Gastrocnemius medialis (tissue), 4 donors: ENCODE measurements at regions of chr16 and their contacts with region 1.

Region 1: DNA sequence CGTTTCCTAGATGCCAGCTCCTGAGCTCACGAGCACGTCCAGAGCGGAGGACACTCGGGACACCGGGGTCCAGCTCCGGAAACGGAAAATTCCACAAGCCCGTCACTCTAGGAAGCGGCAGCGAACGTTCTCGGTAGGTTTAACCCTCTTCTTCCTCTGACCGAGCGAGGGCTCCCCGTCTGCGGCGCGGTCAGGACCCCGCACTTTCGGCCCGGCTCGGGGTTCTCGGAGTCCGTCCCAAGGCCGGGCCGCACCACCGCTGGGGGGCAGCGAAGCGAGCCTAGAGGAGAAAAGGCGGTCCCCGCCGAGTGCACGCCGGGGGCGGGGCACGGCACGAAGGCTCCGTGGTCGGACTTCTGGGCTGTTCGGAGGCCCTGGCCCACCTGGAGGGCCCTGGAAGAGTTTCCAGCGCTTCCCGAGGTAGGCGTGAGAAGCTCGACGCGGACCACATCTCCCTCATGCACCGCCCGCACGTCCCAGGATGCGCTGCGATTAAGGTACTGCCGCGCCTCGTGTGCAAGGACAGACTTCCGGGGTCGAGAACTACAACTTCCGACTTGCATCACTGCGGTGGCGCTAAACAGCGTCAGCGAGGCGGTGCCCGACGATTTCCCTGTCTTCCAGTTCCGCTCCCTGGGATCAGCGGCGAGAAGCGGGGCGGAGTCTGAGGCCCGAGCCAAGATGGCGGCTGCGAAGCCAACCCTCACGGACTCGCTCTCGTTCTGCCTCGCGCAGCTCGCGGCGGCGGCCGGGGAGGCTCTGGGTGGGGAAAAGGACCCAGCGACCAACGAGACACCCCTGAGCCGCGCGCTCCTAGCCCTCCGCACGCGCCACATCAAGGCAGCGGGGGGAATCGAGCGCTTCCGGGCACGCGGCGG is at the start of gene ARMC5:
- DNase-seq: peak; percentile 97 to 98
- ATAC-seq: peak; percentile 78 to 82
- H3K4me3 ChIP-seq: peak within 1 kb of the TSS; percentile 77 to 90 (median 86)
- H3K27ac ChIP-seq: peak within 1 kb of the TSS; percentile 90 to 99 (median 94)
- H3K4me1 ChIP-seq: peaks cover 53 to 57% of the 10 kb centered on the region in 2 donors
- H3K27me3 ChIP-seq: no peaks in the 10 kb centered on the region
- CTCF ChIP-seq: peak; percentile 33 to 80 (median 74)
- POLR2A ChIP-seq: peak; percentile 93 to 97
- total RNA-seq, gene ARMC5: 13.9 to 24.3 (median 19.4) TPM

Region 2: GRCh38 chr16:30957456-30958174 is 501.5 kb before region 1 on chr16 and contains the start of gene SETD1A:
- in situ Hi-C with region 1: no loop called
- intact Hi-C with region 1: loop called (anchors 1 kb)
- DNase-seq: peak; percentile 95
- ATAC-seq: peak; percentile 92 to 93
- H3K4me3 ChIP-seq: peak within 1 kb of the TSS; percentile 70 to 94 (median 84)
- H3K27ac ChIP-seq: peak within 1 kb of the TSS; percentile 97 to 99 (median 98)
- H3K4me1 ChIP-seq: peaks cover 11 to 17% of the 10 kb centered on the region in 2 donors
- H3K27me3 ChIP-seq: no peaks in the 10 kb centered on the region
- CTCF ChIP-seq: peak in 2 of 5 experiments; percentile 22 to 41
- POLR2A ChIP-seq: peak; percentile 66 to 75
- total RNA-seq, gene SETD1A: 3.8 to 15.4 (median 9.8) TPM

Region 3: DNA sequence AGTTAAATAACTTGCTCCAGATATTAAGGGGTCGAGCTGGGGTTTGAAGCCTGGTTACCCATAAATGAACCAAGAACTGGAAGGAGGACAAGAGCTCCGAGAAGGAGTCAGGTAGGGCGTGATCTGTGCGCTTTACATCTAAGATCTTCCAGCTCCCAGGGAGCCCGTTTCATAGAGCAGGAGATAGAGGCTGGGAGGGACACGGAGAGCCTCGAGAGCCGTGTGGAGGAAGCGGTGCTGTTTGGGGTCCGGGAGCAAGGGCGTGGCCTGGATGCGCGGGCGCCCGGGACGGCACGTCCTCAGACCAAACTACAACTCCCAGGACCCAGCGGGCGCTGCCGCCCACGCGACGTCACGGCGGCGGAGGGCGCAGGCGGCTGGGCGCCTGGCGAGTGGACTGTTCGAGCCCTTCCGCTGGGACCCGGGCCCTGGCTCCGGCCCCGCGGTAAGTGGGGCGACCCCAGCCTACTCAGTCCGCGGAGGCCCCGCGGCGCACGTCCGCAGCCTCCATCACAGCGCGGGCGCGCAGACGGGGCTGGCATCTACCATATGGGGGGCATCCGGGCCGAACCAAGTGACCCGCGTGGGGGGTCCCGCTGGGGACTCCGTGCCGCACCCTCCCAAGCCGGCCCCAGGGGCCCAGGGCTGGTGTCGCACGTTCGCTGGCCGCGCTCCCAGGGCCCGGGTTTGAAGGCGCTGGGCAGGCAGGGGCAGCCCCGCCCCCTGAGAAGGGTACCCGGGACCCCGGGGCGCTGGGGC is 350.9 kb before region 1 on chr16 and contains the start of gene BCKDK:
- in situ Hi-C with region 1: no loop called
- intact Hi-C with region 1: loop called (anchors 5 kb)
- DNase-seq: peak; percentile 52 to 70
- ATAC-seq: peak; percentile 50
- H3K4me3 ChIP-seq: peak within 1 kb of the TSS; percentile 74 to 98 (median 92)
- H3K27ac ChIP-seq: peak within 1 kb of the TSS; percentile 85 to 100 (median 97)
- H3K4me1 ChIP-seq: peaks cover 35 to 43% of the 10 kb centered on the region in 2 donors
- H3K27me3 ChIP-seq: no peaks in the 10 kb centered on the region
- CTCF ChIP-seq: no peak
- POLR2A ChIP-seq: peak; percentile 71 to 81
- total RNA-seq, gene BCKDK: 24.7 to 68.9 (median 50.9) TPM

Region 4: GRCh38 chr16:31367853-31368252 is 91.2 kb before region 1 on chr16:
- in situ Hi-C with region 1: no loop called
- intact Hi-C with region 1: no loop called
- DNase-seq: no peak
- ATAC-seq: no peak
- H3K4me3 ChIP-seq: no peak overlapping the region
- H3K27ac ChIP-seq: no peak overlapping the region
- H3K4me1 ChIP-seq: no peaks in the 10 kb centered on the region
- H3K27me3 ChIP-seq: no peaks in the 10 kb centered on the region
- CTCF ChIP-seq: no peak
- POLR2A ChIP-seq: no peak

Region 5: DNA sequence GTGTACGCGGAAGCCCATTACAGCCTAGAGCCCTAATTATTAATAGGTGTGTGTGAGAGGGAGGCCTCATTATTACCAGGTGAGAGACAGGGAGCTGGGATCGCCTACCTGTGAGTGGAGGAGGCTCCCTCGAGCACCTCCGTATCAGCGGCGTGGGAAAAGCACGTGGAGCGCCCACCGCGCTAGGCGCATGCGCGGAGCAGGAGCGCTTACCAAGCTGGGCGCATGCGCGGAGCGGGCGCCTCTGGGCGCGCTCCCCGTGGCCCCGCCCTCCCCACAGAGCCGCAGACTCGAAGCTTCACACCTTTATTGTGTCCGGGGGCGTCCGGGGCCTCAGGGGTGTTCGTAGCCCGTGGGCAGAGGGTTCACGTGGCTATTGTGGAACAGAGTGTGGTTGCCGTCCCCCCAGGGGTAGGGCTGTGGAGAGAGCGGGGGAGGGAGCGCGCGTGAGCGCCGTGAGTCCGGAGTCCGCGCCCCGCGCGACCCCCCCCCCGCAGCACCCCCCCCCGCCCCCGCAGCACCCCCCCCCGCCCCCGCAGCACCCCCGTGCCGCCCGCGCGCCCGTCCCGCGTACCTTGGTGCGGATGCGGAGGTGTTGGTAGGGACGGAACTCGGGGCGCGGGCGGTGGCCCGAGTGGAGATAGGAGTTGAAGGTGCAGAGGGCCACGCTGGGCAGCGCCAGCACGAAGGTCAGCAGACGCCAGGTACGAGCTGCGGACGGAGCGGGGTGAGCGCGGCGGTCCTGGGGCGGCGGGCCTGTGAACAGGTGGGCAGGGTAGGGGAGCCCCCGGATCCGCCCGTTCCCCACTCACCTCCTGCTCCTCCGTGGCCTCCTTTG is 31.4 kb before region 1 on chr16:
- in situ Hi-C with region 1: no loop called
- intact Hi-C with region 1: loop called (anchors 1 kb)
- DNase-seq: peak; percentile 62 to 84
- ATAC-seq: peak; percentile 12 to 28
- H3K4me3 ChIP-seq: peak overlapping the region; percentile 67 to 83 (median 79)
- H3K27ac ChIP-seq: peak overlapping the region; percentile 92 to 100 (median 98)
- H3K4me1 ChIP-seq: peaks cover 62 to 77% of the 10 kb centered on the region in 2 donors
- H3K27me3 ChIP-seq: no peaks in the 10 kb centered on the region
- CTCF ChIP-seq: no peak
- POLR2A ChIP-seq: peak in 1 of 2 donors; percentile 10